Panc1 (cell line): ENCODE measurements at regions of chr17 and their contacts with region 1.

Region 1: GRCh38 chr17:43024407-43025289 is at the start of gene RND2:
- DNase-seq: peak; percentile 52
- ATAC-seq: peak; percentile 65
- H3K4me3 ChIP-seq: peak within 1 kb of the TSS; percentile 46 to 75
- H3K27ac ChIP-seq: 0 out of 2 replicates have a peak within 1 kb of the TSS, but pooled peaks have one; percentile 39
- H3K4me1 ChIP-seq: peaks cover 8% of the 10 kb centered on the region
- H3K27me3 ChIP-seq: no peaks in the 10 kb centered on the region
- CTCF ChIP-seq: no peak; the same call in 1 of the 2 replicates
- total RNA-seq, gene RND2: 0.59 TPM

Region 2: GRCh38 chr17:42866631-42867575 is 157.7 kb before region 1 on chr17:
- CTCF ChIA-PET with region 1: no interaction called
- POLR2A ChIA-PET with region 1: no interaction called
- in situ Hi-C with region 1: no loop called
- intact Hi-C with region 1: no loop called
- DNase-seq: no peak
- ATAC-seq: no peak
- H3K4me3 ChIP-seq: no peak overlapping the region
- H3K27ac ChIP-seq: no peak overlapping the region
- H3K4me1 ChIP-seq: no peaks in the 10 kb centered on the region
- H3K27me3 ChIP-seq: no peaks in the 10 kb centered on the region
- CTCF ChIP-seq: no peak

Region 3: DNA sequence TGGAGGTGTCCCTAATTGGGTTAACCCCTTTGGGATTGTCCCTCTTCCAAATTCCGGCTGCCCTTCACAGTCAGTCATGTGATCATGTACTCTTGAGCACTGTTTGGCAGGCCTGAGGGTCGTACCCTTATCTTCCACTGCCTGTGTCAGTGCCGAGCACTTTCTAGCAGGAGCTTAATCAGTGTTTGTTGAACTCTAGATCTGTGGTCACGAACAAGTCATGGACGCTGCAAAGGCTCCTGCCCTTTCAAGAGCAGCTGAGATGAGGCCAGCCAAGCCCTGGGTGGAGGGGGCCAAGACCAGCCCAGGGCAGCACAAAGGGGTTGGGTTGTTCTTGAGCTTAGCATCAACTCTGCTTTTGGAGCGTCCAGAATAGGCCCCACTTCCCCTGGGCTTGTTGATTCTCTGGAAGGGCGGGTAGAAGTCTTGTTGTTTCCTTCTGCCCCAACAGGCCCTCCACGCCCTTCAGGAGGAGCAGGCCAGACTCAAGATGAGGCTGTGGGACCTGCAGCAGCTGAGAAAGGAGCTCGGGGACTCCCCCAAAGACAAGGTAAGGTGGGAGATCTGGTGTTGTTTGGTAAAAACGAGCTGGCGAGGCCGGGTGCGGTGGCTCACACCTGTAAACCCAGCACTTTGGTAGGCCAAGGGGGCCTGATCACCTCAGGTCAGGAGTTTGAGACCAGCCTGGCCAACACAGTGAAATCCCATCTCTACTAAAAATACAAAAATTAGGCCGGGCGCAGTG is 12.7 kb before region 1 on chr17:
- CTCF ChIA-PET with region 1: interaction called, 11 read pairs
- POLR2A ChIA-PET with region 1: no interaction called
- in situ Hi-C with region 1: no loop called
- intact Hi-C with region 1: no loop called
- DNase-seq: no peak
- ATAC-seq: no peak
- H3K4me3 ChIP-seq: no peak overlapping the region
- H3K27ac ChIP-seq: no peak overlapping the region
- H3K4me1 ChIP-seq: peaks cover 10% of the 10 kb centered on the region
- H3K27me3 ChIP-seq: no peaks in the 10 kb centered on the region
- CTCF ChIP-seq: no peak

Region 4: GRCh38 chr17:43068570-43069367 is 44.1 kb after region 1 on chr17:
- CTCF ChIA-PET with region 1: interaction called, 16 read pairs
- POLR2A ChIA-PET with region 1: no interaction called
- in situ Hi-C with region 1: no loop called
- intact Hi-C with region 1: no loop called
- DNase-seq: no peak
- ATAC-seq: no peak
- H3K4me3 ChIP-seq: no peak overlapping the region
- H3K27ac ChIP-seq: no peak overlapping the region
- H3K4me1 ChIP-seq: no peaks in the 10 kb centered on the region
- H3K27me3 ChIP-seq: no peaks in the 10 kb centered on the region
- CTCF ChIP-seq: no peak